ENCODE measurements at regions of chr2 and their contacts with region 1.

Region 1: GRCh38 chr2:204260162-204260877 is 285.0 kb upstream of the PARD3B start:
- DNase-seq: peak; percentile 62 to 72 (median 67)
- ATAC-seq: peak; percentile 89
- H3K4me3 ChIP-seq: no peak overlapping the region
- H3K27ac ChIP-seq: no peak overlapping the region
- H3K4me1 ChIP-seq: no peaks in the 10 kb centered on the region
- H3K27me3 ChIP-seq: peaks cover 0 to 7% of the 10 kb centered on the region in 2 experiments; a peak in 2 of 5 replicates
- CTCF ChIP-seq: peak; percentile 66 to 88 (median 77)
- EP300 ChIP-seq: no peak
- POLR2A ChIP-seq: no peak
- RAD21 ChIP-seq: peak; percentile 66 to 71

Region 2: DNA sequence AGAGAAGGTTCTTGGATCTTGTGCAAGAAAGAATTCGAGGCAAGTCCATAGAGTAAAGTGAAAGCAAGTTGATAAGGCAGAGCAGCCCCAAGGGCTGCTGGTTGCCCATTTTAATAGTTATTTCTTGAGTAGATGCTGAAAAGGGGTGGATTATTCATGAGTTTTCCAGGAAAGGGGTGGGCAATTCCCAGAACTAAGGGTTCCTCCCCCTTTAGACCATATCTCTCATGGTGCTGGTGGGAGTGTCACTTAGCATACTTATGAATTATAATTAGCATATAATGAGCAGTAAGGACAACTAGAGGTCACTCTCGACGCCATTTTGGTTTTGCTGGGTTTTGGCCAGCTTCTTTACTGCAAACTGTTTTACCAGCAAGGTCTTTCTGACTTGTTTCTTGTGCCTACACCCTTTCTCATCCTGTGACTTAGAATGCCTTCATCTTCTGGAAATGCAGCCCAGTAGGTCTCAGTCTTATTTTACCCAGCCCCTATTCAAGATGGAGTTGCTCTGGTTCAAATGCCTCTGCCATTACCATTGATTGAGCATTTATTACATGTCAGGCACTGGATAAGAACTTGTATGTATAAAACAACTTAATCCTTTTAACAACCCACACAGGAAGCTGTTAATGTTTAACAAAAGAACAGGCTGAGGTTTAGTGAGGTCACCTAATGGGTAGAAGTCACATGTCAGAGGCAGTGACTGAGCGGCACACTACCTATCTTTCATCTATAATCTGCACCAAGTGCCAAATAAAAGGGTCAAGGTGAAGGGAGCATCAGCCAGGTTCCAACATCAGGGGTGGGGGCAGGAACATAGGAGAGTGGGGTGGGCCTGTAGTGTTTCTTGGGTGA is 72.9 kb before region 1 on chr2:
- CTCF ChIA-PET with region 1: no interaction called
- POLR2A ChIA-PET with region 1: no interaction called
- in situ Hi-C with region 1: no loop called
- intact Hi-C with region 1: no loop called
- DNase-seq: peak in 1 of 4 experiments; percentile 6
- ATAC-seq: no peak
- H3K4me3 ChIP-seq: no peak overlapping the region
- H3K27ac ChIP-seq: no peak overlapping the region
- H3K4me1 ChIP-seq: no peaks in the 10 kb centered on the region
- H3K27me3 ChIP-seq: no peaks in the 10 kb centered on the region
- CTCF ChIP-seq: no peak
- EP300 ChIP-seq: no peak
- POLR2A ChIP-seq: no peak
- RAD21 ChIP-seq: no peak

Region 3: GRCh38 chr2:204282525-204282924 is 22.2 kb after region 1 on chr2:
- CTCF ChIA-PET with region 1: no interaction called
- POLR2A ChIA-PET with region 1: no interaction called
- in situ Hi-C with region 1: no loop called
- intact Hi-C with region 1: no loop called
- DNase-seq: no peak
- ATAC-seq: no peak
- H3K4me3 ChIP-seq: no peak overlapping the region
- H3K27ac ChIP-seq: no peak overlapping the region
- H3K4me1 ChIP-seq: no peaks in the 10 kb centered on the region
- H3K27me3 ChIP-seq: peaks cover 0 to 8% of the 10 kb centered on the region in 2 experiments; a peak in 1 of 5 replicates
- CTCF ChIP-seq: no peak
- EP300 ChIP-seq: no peak
- POLR2A ChIP-seq: no peak
- RAD21 ChIP-seq: no peak

Region 4: GRCh38 chr2:204370172-204370743 is 109.9 kb after region 1 on chr2:
- CTCF ChIA-PET with region 1: no interaction called
- POLR2A ChIA-PET with region 1: no interaction called
- in situ Hi-C with region 1: no loop called
- intact Hi-C with region 1: no loop called
- DNase-seq: no peak
- ATAC-seq: no peak
- H3K4me3 ChIP-seq: no peak overlapping the region
- H3K27ac ChIP-seq: no peak overlapping the region
- H3K4me1 ChIP-seq: no peaks in the 10 kb centered on the region; a peak in 1 of 5 replicates
- H3K27me3 ChIP-seq: no peaks in the 10 kb centered on the region
- CTCF ChIP-seq: no peak
- EP300 ChIP-seq: no peak
- POLR2A ChIP-seq: no peak
- RAD21 ChIP-seq: no peak

Region 5: DNA sequence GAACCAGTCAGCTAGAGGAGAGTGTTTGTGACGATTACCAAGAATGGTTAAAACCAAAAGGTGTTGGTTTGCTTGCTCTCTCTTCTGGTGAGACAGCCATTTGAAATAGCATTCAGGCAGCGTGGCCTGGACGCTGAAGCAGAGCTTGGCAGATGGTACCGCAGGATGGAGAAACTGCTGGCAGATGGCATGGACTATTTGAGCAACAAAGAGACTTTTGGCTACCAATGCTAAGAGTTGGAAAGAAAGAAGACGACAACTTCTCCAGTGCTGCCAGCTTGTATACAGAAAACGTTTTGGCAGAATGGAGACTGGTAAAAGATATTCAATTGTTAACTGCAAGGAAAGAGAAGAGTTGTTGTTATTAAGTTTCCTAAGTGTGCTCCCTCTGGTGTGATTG is 600.0 kb after region 1 on chr2:
- CTCF ChIA-PET with region 1: no interaction called
- POLR2A ChIA-PET with region 1: no interaction called
- in situ Hi-C with region 1: no loop called
- intact Hi-C with region 1: loop called (anchors 10 kb)
- DNase-seq: no peak
- ATAC-seq: no peak
- H3K4me3 ChIP-seq: no peak overlapping the region
- H3K27ac ChIP-seq: no peak overlapping the region
- H3K4me1 ChIP-seq: no peaks in the 10 kb centered on the region
- H3K27me3 ChIP-seq: no peaks in the 10 kb centered on the region
- CTCF ChIP-seq: no peak
- EP300 ChIP-seq: no peak
- POLR2A ChIP-seq: no peak
- RAD21 ChIP-seq: no peak